BJ (cell line): ENCODE measurements at regions of chr22 and their contacts with region 1.

Region 1: DNA sequence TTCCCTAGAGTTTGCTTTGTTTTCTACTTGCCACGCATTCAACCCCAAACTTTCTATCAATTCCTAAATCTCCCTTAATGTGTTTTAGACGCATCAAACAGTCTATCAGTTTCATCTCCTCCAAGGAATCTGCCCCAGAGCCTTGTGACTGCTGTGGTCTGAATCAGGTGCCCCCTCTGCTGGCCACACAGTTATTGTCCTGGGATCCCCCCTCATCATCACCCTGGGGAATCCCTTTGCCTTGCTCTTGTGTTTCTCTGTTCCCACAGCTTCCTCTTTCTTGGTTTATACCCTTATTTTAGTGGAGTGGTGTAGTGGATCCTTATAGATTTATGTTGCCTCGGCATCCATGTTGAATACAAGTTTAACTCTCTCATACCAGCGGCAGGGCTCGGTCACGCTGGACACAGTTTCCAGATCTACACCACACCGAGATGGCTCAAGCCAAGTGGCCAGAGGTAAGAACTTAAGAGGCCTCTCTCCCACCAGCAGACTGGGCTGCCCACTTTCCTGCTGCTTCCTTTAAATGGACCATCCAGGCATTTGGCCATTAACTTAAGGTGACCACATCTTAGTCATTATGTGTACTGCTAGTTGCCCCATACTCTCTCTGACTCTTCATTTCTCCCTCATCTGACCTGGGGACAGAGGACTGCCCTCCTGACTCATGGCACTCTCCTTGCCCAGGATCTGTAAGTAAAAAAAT is 8.2 kb downstream of the UPB1 start:
- DNase-seq: no peak
- H3K4me3 ChIP-seq: no peak overlapping the region
- H3K27me3 ChIP-seq: no peaks in the 10 kb centered on the region
- CTCF ChIP-seq: peak; percentile 81

Region 2: GRCh38 chr22:24417901-24418641 is 85.2 kb before region 1 on chr22:
- CTCF ChIA-PET with region 1: interaction called, 50 read pairs
- POLR2A ChIA-PET with region 1: no interaction called
- DNase-seq: no peak
- H3K4me3 ChIP-seq: no peak overlapping the region
- H3K27me3 ChIP-seq: no peaks in the 10 kb centered on the region
- CTCF ChIP-seq: no peak

Region 3: DNA sequence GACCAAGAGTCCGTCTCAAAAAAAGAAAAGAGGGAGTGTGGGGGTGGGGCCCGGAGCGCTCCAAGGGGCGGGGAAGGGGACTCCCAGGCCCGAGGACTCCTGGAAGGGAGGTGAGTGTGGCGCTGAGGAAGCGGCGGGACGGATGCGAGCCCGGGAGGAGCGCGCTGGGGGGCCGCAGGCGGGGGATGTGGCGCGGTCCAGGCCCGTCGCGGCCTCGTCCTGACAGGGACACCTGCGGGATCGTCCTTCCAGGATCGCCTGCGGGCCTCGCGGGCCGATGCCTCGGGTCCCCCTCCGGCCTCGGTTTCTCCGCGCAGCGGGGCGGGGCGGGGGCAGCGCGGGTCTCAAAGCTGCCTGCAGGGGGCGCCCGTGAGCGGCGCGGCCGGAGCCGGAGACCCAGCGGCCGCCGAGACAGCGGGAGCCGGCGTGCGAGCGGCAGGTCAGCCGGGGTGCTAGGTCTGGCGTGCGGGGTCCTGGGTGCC is 79.7 kb before region 1 on chr22:
- CTCF ChIA-PET with region 1: interaction called, 50 read pairs
- POLR2A ChIA-PET with region 1: no interaction called
- DNase-seq: no peak
- H3K4me3 ChIP-seq: peak overlapping the region; percentile 56
- H3K27me3 ChIP-seq: peaks cover 7% of the 10 kb centered on the region
- CTCF ChIP-seq: peak; percentile 43

Region 4: GRCh38 chr22:24550028-24550901 is 47.0 kb after region 1 on chr22:
- CTCF ChIA-PET with region 1: no interaction called
- POLR2A ChIA-PET with region 1: no interaction called
- DNase-seq: no peak
- H3K4me3 ChIP-seq: no peak overlapping the region
- H3K27me3 ChIP-seq: no peaks in the 10 kb centered on the region
- CTCF ChIP-seq: no peak